ENCODE measurements at regions of chr2 and their contacts with region 1.

Region 1: DNA sequence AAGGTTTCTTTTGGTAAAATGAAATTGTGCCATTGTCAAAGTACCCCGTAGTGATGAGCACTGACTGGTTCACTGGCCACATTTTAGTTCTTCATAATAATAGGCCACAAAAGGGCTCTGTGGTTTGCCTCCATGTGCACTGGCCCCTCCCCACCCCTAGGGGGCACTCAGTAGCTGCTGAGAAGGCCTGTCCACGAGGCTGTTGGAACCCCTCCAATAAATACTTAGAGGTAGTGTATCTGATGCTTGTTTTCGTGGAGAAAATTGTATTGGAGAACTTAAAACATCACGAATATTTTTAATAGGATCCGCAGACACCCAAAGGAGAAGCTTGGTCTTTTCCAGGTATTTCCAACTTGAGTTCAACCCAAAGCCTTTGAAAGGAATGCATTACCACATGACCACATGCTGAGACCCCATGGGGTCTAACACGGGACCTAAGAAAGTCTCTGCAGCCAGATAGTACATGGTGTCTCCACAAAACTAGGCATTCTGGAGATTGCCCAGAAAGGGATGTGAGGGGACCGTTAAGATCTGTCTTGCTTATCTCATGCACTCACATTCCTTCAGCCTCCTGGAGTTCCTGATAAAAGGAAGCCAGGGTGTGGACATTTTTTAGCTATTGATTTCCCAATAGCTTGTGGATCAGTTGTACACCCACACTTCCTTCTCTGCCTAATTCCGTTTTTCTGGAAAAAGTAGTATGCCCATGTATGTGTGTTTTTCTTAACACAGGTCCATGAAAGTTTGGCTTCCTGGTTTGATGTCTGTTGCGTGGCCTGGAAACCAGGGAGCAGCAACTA is 28.5 kb upstream of the NOSTRIN start:
- DNase-seq: peak; percentile 62 to 81 (median 76)
- ATAC-seq: peak; percentile 96 to 97 (median 96)
- H3K4me3 ChIP-seq: no peak overlapping the region
- H3K27ac ChIP-seq: no peak overlapping the region
- H3K4me1 ChIP-seq: peaks cover 0 to 12% (median 4%) of the 10 kb centered on the region in 4 donors
- H3K27me3 ChIP-seq: no peaks in the 10 kb centered on the region
- CTCF ChIP-seq: peak; percentile 92 to 98 (median 94)
- POLR2A ChIP-seq: no peak

Region 2: DNA sequence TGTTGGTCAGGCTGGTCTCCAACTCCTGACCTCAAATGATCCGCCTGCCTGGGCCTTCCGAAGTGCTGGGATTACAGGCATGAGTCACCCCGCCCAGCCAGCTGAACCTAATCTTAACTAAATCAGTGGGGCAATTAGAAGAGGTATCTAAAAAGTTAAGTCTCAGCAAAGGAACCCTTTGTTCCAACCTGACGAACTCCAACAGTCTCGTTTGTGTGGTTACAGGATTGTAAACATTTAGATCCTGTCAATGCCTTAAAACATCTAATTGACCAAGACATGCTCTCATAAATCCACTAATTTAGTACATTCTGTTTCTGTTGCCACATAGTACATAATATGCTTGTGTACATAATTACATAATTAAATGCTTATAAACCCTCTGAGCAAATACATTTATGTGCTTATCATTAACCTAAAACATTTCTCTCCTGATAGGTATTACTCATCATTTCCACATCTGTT is 495.5 kb before region 1 on chr2:
- intact Hi-C with region 1: no loop called
- DNase-seq: no peak
- ATAC-seq: no peak
- H3K4me3 ChIP-seq: no peak overlapping the region
- H3K27ac ChIP-seq: no peak overlapping the region
- H3K4me1 ChIP-seq: no peaks in the 10 kb centered on the region
- H3K27me3 ChIP-seq: no peaks in the 10 kb centered on the region
- CTCF ChIP-seq: no peak
- POLR2A ChIP-seq: no peak

Region 3: DNA sequence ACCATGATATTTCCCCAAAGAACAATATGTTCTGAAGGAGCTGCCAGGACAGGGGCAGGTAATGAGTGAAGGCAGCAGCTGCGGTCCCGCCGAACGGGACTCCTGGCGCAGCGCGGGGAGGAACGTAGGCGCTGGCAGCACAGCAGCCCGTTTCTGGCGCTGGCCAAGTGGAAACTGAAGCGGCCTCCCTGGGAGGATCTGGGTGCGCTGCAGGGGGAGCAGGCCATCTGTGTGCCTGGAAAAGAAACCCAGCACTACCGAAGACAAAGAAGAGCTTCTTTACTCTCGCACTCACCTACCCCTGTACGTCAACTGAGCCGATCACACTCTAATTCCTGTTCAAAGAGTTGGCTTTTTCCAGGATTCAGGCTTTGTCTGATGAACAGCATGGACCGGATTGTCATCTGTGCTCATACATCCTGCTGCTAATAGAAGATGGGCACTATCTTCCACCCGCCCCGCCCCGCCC is 139.0 kb after region 1 on chr2:
- intact Hi-C with region 1: loop called in 1 of 2 experiments (anchors 10 kb)
- DNase-seq: peak; percentile 46 to 71 (median 60)
- ATAC-seq: peak; percentile 70 to 81 (median 78)
- H3K4me3 ChIP-seq: peak overlapping the region in 2 of 3 donors; percentile 1 to 8
- H3K27ac ChIP-seq: no peak overlapping the region
- H3K4me1 ChIP-seq: peaks cover 0 to 9% (median 4%) of the 10 kb centered on the region in 4 donors
- H3K27me3 ChIP-seq: no peaks in the 10 kb centered on the region
- CTCF ChIP-seq: no peak
- POLR2A ChIP-seq: no peak

Region 4: DNA sequence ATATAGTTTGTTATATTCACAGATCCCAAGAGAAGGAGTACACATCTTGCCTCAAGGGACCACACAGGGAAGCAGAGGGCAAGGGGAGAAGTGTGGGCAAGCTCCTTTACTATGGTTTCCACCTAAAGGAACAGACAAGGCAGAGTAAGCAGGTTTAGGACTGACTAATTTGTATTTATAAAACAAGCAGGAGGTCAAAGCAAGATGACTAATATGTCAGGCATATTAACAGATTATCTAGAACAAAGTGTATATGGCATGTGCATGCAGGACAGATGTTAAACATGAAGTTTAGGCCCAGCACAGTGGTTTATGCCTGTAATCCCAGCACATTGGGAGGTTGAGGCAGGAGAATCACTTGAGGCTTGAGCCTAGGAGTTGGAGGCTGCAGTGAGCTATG is 592.1 kb after region 1 on chr2:
- intact Hi-C with region 1: no loop called
- DNase-seq: no peak
- ATAC-seq: no peak
- H3K4me3 ChIP-seq: no peak overlapping the region
- H3K27ac ChIP-seq: no peak overlapping the region
- H3K4me1 ChIP-seq: peaks cover 0 to 25% (median 7%) of the 10 kb centered on the region in 4 donors
- H3K27me3 ChIP-seq: no peaks in the 10 kb centered on the region
- CTCF ChIP-seq: no peak
- POLR2A ChIP-seq: no peak

Measured in right lobe of liver (tissue), 6 donors.